Activated CD4-positive, alpha-beta T cell treated with anti-CD3 and anti-CD28 coated beads for 36 hours (primary cell): ENCODE measurements at regions of chr7 and their contacts with region 1.

Region 1: DNA sequence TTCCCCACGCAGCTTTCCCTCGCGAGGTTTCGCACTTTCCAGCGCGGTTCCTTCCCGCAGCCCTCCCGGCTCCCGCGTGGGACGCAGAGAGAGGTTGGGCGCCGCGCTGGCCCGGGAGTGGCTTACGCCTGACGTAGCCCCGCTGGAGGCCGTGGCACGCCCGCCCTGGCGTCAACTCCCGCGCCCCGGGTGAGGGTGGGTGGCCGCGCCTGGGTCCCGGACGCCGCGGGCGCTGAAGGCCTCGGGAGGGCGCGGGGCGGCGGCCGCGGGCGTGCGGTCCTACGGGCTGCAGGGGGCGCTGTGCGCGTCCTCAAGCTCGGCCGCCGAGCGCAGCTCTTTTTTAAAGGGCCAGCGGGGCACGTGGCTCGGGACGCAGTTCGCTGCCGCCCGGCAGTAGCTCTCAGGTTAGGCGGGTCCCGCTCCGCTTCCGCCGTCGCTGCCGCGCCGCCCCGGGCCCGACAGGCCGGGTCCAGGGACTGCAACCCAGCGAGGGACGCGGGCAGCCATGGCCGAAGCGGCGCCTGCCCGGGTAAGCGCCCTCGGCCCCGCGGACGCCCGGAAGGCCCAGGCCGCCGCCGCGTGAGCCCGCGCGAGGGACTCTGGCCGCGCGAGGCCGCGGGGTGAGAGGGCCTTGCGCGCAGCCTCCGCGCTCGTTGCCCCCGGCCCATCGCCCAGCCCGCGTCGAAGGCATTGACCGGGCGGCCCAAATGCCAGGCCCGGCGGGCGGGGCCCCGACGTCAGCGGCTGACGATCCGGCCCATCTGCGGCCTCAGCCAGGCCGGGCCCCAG is at the start of gene ZNF783:
- DNase-seq: peak; percentile 92
- ATAC-seq: peak; percentile 84
- H3K4me3 Mint-ChIP-seq: peak within 1 kb of the TSS; percentile 74
- H3K27ac Mint-ChIP-seq: peak within 1 kb of the TSS; percentile 96
- H3K4me1 Mint-ChIP-seq: peaks cover 40% of the 10 kb centered on the region
- H3K27me3 Mint-ChIP-seq: no peaks in the 10 kb centered on the region
- total RNA-seq, gene ZNF783: 14.5 to 15.4 TPM

Region 2: GRCh38 chr7:148598351-148598750 is 663.7 kb before region 1 on chr7:
- CTCF ChIA-PET with region 1: no interaction called
- POLR2A ChIA-PET with region 1: no interaction called
- intact Hi-C with region 1: no loop called
- DNase-seq: no peak
- ATAC-seq: no peak
- H3K4me3 Mint-ChIP-seq: no peak overlapping the region
- H3K27ac Mint-ChIP-seq: no peak overlapping the region
- H3K4me1 Mint-ChIP-seq: no peaks in the 10 kb centered on the region
- H3K27me3 Mint-ChIP-seq: peaks cover 2% of the 10 kb centered on the region

Region 3: GRCh38 chr7:148987010-148987750 is 274.8 kb before region 1 on chr7:
- CTCF ChIA-PET with region 1: no interaction called
- POLR2A ChIA-PET with region 1: no interaction called
- intact Hi-C with region 1: loop called in 1 of 2 experiments (anchors 2 kb)
- DNase-seq: peak; percentile 88
- ATAC-seq: peak; percentile 84
- H3K4me3 Mint-ChIP-seq: peak overlapping the region; percentile 90
- H3K27ac Mint-ChIP-seq: peak overlapping the region; percentile 97
- H3K4me1 Mint-ChIP-seq: peaks cover 40% of the 10 kb centered on the region
- H3K27me3 Mint-ChIP-seq: peaks cover 2% of the 10 kb centered on the region

Region 4: GRCh38 chr7:149125863-149126661 is 136.0 kb before region 1 on chr7 and contains the start of gene ZNF425:
- CTCF ChIA-PET with region 1: interaction called, 3 read pairs
- POLR2A ChIA-PET with region 1: no interaction called
- intact Hi-C with region 1: loop called (anchors 1 to 5 kb)
- DNase-seq: peak; percentile 96
- ATAC-seq: peak; percentile 88
- H3K4me3 Mint-ChIP-seq: peak within 1 kb of the TSS; percentile 83
- H3K27ac Mint-ChIP-seq: peak within 1 kb of the TSS; percentile 99
- H3K4me1 Mint-ChIP-seq: peaks cover 21% of the 10 kb centered on the region
- H3K27me3 Mint-ChIP-seq: no peaks in the 10 kb centered on the region
- total RNA-seq, gene ZNF425: 0.43 to 0.95 TPM

Region 5: GRCh38 chr7:149195180-149196150 is 66.6 kb before region 1 on chr7 and contains the start of gene ZNF282:
- CTCF ChIA-PET with region 1: interaction called, 3 read pairs
- POLR2A ChIA-PET with region 1: interaction called, 3 read pairs
- intact Hi-C with region 1: loop called in 1 of 2 experiments (anchors 1 kb)
- DNase-seq: peak; percentile 89
- ATAC-seq: peak; percentile 91
- H3K4me3 Mint-ChIP-seq: peak within 1 kb of the TSS; percentile 95
- H3K27ac Mint-ChIP-seq: peak within 1 kb of the TSS; percentile 94
- H3K4me1 Mint-ChIP-seq: peaks cover 42% of the 10 kb centered on the region
- H3K27me3 Mint-ChIP-seq: no peaks in the 10 kb centered on the region
- total RNA-seq, gene ZNF282: 41.1 to 46.3 TPM

Region 6: DNA sequence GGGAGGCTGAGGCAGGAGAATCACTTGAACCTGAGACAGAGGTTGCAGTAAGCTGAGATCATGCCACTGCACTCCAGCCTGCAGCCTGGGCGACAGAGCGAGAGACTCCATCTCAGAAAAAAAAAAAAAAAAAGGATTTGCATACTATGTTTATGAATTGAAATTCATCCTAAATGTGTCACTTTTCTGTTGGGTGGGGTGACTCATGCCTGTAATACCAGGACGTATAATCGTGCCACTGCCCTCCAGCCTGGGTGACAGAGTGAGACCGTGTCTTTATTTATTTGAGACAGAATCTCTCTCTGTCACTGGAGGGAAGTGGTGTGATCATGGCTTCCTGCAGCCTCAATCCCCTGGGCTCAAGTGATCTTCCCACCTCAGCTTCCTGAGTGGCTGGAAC is 16.8 kb before region 1 on chr7:
- CTCF ChIA-PET with region 1: interaction called, 29 read pairs
- POLR2A ChIA-PET with region 1: interaction called, 9 read pairs
- intact Hi-C with region 1: loop called (anchors 1 kb)
- DNase-seq: peak; percentile 79
- ATAC-seq: peak; percentile 85
- H3K4me3 Mint-ChIP-seq: peak overlapping the region; percentile 48
- H3K27ac Mint-ChIP-seq: peak overlapping the region; percentile 96
- H3K4me1 Mint-ChIP-seq: peaks cover 72% of the 10 kb centered on the region
- H3K27me3 Mint-ChIP-seq: no peaks in the 10 kb centered on the region

Region 7: DNA sequence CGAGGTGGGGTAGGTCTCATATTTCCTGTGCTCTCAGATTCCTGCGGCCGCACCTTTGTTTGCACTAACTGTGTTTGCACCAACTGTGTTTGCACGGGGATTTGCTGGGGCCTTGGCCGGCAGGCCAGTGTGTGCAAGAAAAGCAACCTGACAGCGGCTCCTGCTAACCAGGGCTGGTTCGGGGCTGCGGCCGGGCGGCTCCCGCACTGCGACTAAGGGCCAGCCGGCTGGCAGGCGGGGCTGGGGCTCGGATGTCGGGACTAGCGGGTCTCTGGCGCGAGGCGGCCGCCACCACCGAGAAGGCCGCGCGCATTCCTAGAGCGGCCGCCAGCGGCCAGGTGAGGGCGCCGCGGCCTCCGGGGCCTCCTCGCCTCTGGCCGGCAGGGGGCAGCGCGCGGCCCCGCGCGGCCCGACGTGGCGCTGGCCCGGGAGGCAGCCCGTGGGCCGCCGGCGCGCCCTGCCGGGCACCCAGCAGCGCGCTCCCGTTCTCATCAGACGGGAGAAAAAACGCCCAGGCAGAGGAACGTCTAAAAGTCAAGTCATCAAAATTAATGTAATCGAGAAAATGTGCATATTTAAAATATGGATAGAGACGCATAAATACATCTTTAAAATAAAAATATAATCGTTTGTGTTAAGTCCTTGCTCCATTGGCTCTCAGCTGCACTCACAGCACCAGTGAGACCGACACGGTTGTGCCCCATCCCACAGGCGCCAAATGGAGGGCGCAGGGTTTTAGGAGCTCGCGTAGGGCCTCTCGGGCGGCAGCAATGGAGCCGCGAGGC is 160.3 kb after region 1 on chr7:
- CTCF ChIA-PET with region 1: interaction called, 3 read pairs
- POLR2A ChIA-PET with region 1: no interaction called
- intact Hi-C with region 1: loop called in 1 of 2 experiments (anchors 1 kb)
- DNase-seq: peak; percentile 84
- ATAC-seq: peak; percentile 98
- H3K4me3 Mint-ChIP-seq: peak overlapping the region; percentile 65
- H3K27ac Mint-ChIP-seq: peak overlapping the region; percentile 63
- H3K4me1 Mint-ChIP-seq: peaks cover 9% of the 10 kb centered on the region
- H3K27me3 Mint-ChIP-seq: no peaks in the 10 kb centered on the region